ENCODE measurements at regions of chr5 and their contacts with region 1.

Region 1: DNA sequence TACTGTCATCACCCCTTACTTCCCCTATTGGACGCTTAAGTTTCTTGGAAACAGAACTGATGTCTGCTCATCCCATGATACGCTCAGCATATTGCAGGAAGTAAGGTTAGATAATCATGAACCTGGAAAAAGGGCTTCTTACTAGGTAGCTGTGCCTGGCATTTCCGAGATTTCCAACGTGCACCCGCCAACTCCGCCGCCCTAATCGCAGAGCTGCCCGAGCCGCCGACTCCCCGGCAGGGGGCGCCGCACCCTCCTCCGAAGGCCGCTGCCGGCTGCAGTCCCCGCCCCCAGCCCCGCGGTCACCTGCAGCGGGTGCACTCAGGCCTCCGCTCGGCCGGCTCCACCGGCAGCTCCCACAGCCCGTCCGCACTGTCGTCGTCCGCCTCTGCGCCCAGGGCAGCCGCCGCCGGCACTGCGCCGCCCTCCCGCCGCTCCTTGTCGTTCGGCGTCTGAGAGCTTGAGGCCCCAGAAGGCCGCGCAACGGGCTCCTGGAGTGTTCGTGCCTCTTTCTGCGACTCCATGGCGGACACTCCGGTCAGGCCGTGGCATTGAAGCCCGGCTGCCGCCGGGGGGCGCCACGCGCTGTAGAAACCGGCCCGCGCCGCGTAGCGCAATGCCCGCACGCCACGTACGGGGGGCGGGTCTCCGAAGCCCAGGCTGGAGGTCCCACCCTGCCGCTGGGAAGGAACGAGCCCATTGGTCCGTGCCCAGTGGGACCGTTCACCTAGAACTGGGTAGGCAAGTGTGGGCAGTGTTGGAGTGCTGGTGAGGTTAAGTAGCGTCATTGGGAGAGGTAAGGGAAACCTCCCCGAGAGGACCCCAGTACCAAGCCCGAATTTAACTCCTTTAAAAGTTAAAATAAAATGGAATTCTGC is at the start of gene DTWD2:
- DNase-seq: peak; percentile 87 to 100 (median 94)
- ATAC-seq: peak; percentile 89 to 94
- H3K4me3 Mint-ChIP-seq: peak within 1 kb of the TSS; percentile 77 to 90 (median 84)
- H3K27ac Mint-ChIP-seq: peak within 1 kb of the TSS; percentile 29 to 93 (median 86)
- H3K4me1 Mint-ChIP-seq: peaks cover 12 to 29% (median 23%) of the 10 kb centered on the region in 4 donors
- H3K27me3 Mint-ChIP-seq: no peaks in the 10 kb centered on the region
- polyA plus RNA-seq, gene DTWD2: 2.9 to 5.2 (median 3.1) TPM

Region 2: GRCh38 chr5:119411935-119412602 is 423.8 kb after region 1 on chr5:
- POLR2A ChIA-PET with region 1: interaction called, 10 read pairs
- DNase-seq: peak; percentile 7 to 79 (median 58)
- ATAC-seq: peak; percentile 84 to 94
- H3K4me3 Mint-ChIP-seq: peak overlapping the region; percentile 85 to 95 (median 92)
- H3K27ac Mint-ChIP-seq: peak overlapping the region; percentile 42 to 94 (median 87)
- H3K4me1 Mint-ChIP-seq: peaks cover 3 to 42% (median 13%) of the 10 kb centered on the region in 4 donors
- H3K27me3 Mint-ChIP-seq: peaks cover 0 to 3% (median 0%) of the 10 kb centered on the region in 5 donors